CD8-positive, alpha-beta T cell (primary cell): ENCODE measurements at regions of chr19 and their contacts with region 1.

Region 1: DNA sequence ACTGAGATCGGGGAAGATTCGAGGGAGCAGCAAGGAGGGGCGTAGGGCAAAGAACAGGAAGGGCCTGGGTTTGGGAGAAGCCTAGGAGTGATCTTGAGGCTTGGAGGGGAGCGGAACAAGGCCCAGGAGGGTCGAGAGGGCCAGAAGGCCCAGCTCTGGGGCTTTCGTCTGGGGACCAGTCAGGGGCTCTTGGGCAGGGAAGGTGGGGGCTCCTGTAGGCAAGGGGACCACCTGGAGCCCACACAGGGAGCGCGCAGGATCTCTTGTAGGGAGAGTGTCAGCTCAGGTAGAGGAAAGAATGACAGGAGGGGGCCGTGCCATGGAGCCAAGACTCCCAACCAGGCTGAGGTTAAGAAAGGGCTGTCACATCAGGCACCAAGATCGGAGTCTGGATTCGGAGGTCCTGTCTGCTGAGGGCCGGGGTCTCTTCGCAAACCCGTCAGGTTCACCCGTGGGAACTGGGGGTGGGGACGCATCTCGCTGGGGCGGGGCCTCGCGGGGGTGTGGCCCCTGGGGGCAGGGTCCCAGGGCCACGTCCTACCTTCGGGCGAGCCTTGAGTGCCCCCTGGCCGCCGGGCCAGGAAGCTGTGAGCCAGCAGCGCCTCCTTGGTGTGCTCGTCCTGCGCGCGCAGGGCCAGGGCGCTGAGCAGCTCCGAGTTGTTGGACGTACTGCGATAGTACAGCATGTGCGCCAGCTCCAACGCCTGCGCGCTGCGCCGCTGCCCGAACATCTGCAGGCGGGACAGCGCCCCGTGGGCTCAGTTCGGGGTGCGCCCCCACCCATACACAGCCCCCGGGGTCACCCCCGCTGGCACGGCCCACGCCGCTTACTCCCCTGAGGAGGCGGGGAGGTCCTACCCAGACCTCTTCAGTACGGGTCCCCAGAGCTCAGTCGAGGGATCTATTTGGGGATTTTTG is 8.4 kb downstream of the EMP3 start:
- DNase-seq: peak; percentile 88 to 97 (median 93)
- ATAC-seq: peak; percentile 55
- H3K4me3 ChIP-seq: peak overlapping the region; percentile 73 to 78
- H3K4me3 Mint-ChIP-seq: peak overlapping the region; percentile 94
- H3K27ac ChIP-seq: peak overlapping the region; percentile 65 to 98
- H3K27ac Mint-ChIP-seq: peak overlapping the region; percentile 96
- H3K4me1 ChIP-seq: peaks cover 41% of the 10 kb centered on the region
- H3K4me1 Mint-ChIP-seq: peaks cover 51% of the 10 kb centered on the region
- H3K27me3 ChIP-seq: no peaks in the 10 kb centered on the region
- H3K27me3 Mint-ChIP-seq: no peaks in the 10 kb centered on the region
- CTCF ChIP-seq: peak; percentile 79

Region 2: GRCh38 chr19:48249502-48250014 is 84.2 kb before region 1 on chr19:
- CTCF ChIA-PET with region 1: no interaction called
- POLR2A ChIA-PET with region 1: no interaction called
- intact Hi-C with region 1: no loop called
- DNase-seq: peak; percentile 30 to 90 (median 77)
- ATAC-seq: peak; percentile 85
- H3K4me3 ChIP-seq: peak overlapping the region; percentile 63 to 76
- H3K4me3 Mint-ChIP-seq: peak overlapping the region; percentile 93
- H3K27ac ChIP-seq: peak overlapping the region; percentile 89 to 98
- H3K27ac Mint-ChIP-seq: peak overlapping the region; percentile 99
- H3K4me1 ChIP-seq: peaks cover 85% of the 10 kb centered on the region
- H3K4me1 Mint-ChIP-seq: peaks cover 81% of the 10 kb centered on the region
- H3K27me3 ChIP-seq: no peaks in the 10 kb centered on the region
- H3K27me3 Mint-ChIP-seq: no peaks in the 10 kb centered on the region
- CTCF ChIP-seq: no peak

Region 3: GRCh38 chr19:48303866-48304265 is 29.9 kb before region 1 on chr19:
- CTCF ChIA-PET with region 1: interaction called, 16 read pairs
- POLR2A ChIA-PET with region 1: no interaction called
- intact Hi-C with region 1: no loop called
- DNase-seq: no peak
- ATAC-seq: no peak
- H3K4me3 ChIP-seq: no peak overlapping the region
- H3K4me3 Mint-ChIP-seq: no peak overlapping the region
- H3K27ac ChIP-seq: no peak overlapping the region
- H3K27ac Mint-ChIP-seq: no peak overlapping the region
- H3K4me1 ChIP-seq: no peaks in the 10 kb centered on the region
- H3K4me1 Mint-ChIP-seq: no peaks in the 10 kb centered on the region
- H3K27me3 ChIP-seq: no peaks in the 10 kb centered on the region
- H3K27me3 Mint-ChIP-seq: no peaks in the 10 kb centered on the region
- CTCF ChIP-seq: no peak

Region 4: GRCh38 chr19:48391107-48391986 is 57.6 kb after region 1 on chr19 and contains the start of gene KDELR1:
- CTCF ChIA-PET with region 1: interaction called, 8 read pairs
- POLR2A ChIA-PET with region 1: interaction called, 5 read pairs
- intact Hi-C with region 1: loop called in 1 of 2 experiments (anchors 1 kb)
- DNase-seq: peak; percentile 53 to 86 (median 76)
- ATAC-seq: peak; percentile 85
- H3K4me3 ChIP-seq: peak within 1 kb of the TSS; percentile 75 to 81
- H3K4me3 Mint-ChIP-seq: peak within 1 kb of the TSS; percentile 92
- H3K27ac ChIP-seq: peak within 1 kb of the TSS; percentile 87 to 92
- H3K27ac Mint-ChIP-seq: peak within 1 kb of the TSS; percentile 95
- H3K4me1 ChIP-seq: peaks cover 37% of the 10 kb centered on the region
- H3K4me1 Mint-ChIP-seq: peaks cover 39% of the 10 kb centered on the region
- H3K27me3 ChIP-seq: peaks cover 24 to 31% of the 10 kb centered on the region in 2 experiments
- H3K27me3 Mint-ChIP-seq: peaks cover 15% of the 10 kb centered on the region
- CTCF ChIP-seq: peak; percentile 96
- total RNA-seq, gene KDELR1: 29.7 to 33.1 TPM

Region 5: DNA sequence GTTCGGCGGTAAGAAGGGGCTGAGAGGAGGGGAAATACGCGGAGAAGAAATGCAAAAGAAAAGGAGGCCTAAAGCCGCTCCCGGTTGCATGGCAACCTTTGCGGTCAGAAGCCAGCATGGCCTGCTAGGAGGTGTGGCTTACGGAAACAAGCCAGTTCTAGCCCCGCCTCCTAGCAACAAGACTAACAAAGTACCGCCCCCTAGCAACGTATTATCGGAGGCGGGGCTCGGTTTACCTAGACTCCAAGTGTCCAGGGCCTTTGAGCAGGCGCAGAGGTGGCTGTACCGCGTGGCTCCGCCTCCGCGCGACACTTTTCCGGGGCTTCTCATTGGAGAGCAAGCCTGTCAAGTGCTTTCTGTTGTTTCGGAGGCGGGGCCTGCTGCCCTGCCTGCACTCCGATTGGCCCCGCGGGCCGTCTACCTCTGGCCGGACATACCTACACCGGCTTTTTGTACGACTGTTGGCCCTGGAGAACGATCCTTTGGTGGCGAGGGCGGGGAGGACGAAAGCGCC is 135.1 kb after region 1 on chr19:
- CTCF ChIA-PET with region 1: no interaction called
- POLR2A ChIA-PET with region 1: no interaction called
- intact Hi-C with region 1: loop called in 1 of 2 experiments (anchors 1 kb)
- DNase-seq: peak; percentile 98 to 100 (median 99)
- ATAC-seq: peak; percentile 85
- H3K4me3 ChIP-seq: peak overlapping the region; percentile 83 to 95
- H3K4me3 Mint-ChIP-seq: peak overlapping the region; percentile 90
- H3K27ac ChIP-seq: peak overlapping the region; percentile 75 to 90
- H3K27ac Mint-ChIP-seq: peak overlapping the region; percentile 85
- H3K4me1 ChIP-seq: peaks cover 15% of the 10 kb centered on the region
- H3K4me1 Mint-ChIP-seq: peaks cover 21% of the 10 kb centered on the region
- H3K27me3 ChIP-seq: no peaks in the 10 kb centered on the region
- H3K27me3 Mint-ChIP-seq: no peaks in the 10 kb centered on the region
- CTCF ChIP-seq: no peak

Region 6: GRCh38 chr19:49869441-49870176 is 1535.9 kb after region 1 on chr19:
- CTCF ChIA-PET with region 1: no interaction called
- POLR2A ChIA-PET with region 1: interaction called, 4 read pairs
- intact Hi-C with region 1: loop called in 1 of 2 experiments (anchors 5 kb)
- DNase-seq: peak; percentile 81 to 98 (median 89)
- ATAC-seq: peak; percentile 75
- H3K4me3 ChIP-seq: peak overlapping the region; percentile 73 to 85
- H3K4me3 Mint-ChIP-seq: no peak overlapping the region
- H3K27ac ChIP-seq: peak overlapping the region; percentile 64 to 96
- H3K27ac Mint-ChIP-seq: no peak overlapping the region
- H3K4me1 ChIP-seq: peaks cover 36% of the 10 kb centered on the region
- H3K4me1 Mint-ChIP-seq: peaks cover 41% of the 10 kb centered on the region
- H3K27me3 ChIP-seq: no peaks in the 10 kb centered on the region
- H3K27me3 Mint-ChIP-seq: no peaks in the 10 kb centered on the region
- CTCF ChIP-seq: no peak